Sigmoid colon (tissue), 7 donors: ENCODE measurements at regions of chr2 and their contacts with region 1.

Region 1: GRCh38 chr2:112626604-112627059 is 19.1 kb upstream of the SLC20A1 start:
- DNase-seq: peak; percentile 73
- H3K4me3 ChIP-seq: peak overlapping the region in 2 of 4 donors; percentile 25 to 27
- H3K27ac ChIP-seq: peak overlapping the region; percentile 53 to 74 (median 58)
- H3K4me1 ChIP-seq: peaks cover 0 to 8% (median 7%) of the 10 kb centered on the region in 4 donors
- H3K27me3 ChIP-seq: peaks cover 0 to 11% (median 0%) of the 10 kb centered on the region in 3 donors
- CTCF ChIP-seq: peak; percentile 70 to 85 (median 78)
- EP300 ChIP-seq: no peak
- POLR2A ChIP-seq: no peak

Region 2: DNA sequence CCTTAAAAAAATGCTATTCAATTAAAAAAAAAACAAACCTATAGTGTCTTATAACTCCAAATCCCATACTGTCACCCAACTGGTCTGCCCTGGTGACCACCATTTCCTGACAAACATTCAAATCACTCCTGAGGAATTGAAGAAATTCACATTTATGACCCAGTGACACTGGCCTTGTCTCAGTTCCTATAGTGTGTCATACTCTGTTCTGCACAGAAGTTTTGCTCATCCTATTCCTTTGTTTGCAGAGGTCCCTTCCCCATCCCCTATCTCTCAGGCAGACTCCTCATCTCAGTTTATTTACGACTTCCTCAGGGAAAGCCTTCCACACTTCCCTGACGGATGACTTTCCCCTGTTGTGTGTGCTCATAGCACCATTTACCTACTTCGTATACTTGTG is 336.5 kb before region 1 on chr2:
- intact Hi-C with region 1: no loop called
- DNase-seq: no peak
- H3K4me3 ChIP-seq: no peak overlapping the region
- H3K27ac ChIP-seq: no peak overlapping the region
- H3K4me1 ChIP-seq: peaks cover 0 to 12% (median 0%) of the 10 kb centered on the region in 4 donors
- H3K27me3 ChIP-seq: no peaks in the 10 kb centered on the region
- CTCF ChIP-seq: no peak
- EP300 ChIP-seq: no peak
- POLR2A ChIP-seq: no peak

Region 3: DNA sequence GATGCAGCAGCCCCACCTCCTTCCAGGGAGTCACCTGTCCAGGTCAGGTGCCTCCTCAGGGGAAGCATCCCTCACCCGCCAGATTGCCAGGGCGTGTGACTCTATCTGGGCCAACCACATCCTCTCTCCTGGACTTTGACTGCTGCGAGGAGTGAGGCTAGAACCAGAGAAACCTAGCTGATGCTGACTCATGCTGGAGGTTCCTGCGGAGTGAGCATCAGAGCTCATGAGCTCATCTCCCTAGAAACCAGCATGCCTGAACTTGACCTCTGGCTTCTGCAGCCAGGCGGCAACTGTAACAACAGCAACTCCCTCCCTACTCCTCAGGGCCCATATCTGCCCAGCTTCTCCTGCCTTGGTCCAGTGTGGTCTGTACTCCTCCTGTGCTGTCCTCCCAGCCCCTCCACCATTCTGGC is 65.9 kb after region 1 on chr2:
- intact Hi-C with region 1: loop called (anchors 5 kb)
- DNase-seq: no peak
- H3K4me3 ChIP-seq: no peak overlapping the region
- H3K27ac ChIP-seq: no peak overlapping the region
- H3K4me1 ChIP-seq: peaks cover 0 to 4% (median 0%) of the 10 kb centered on the region in 4 donors
- H3K27me3 ChIP-seq: no peaks in the 10 kb centered on the region
- CTCF ChIP-seq: no peak
- EP300 ChIP-seq: no peak
- POLR2A ChIP-seq: no peak

Region 4: DNA sequence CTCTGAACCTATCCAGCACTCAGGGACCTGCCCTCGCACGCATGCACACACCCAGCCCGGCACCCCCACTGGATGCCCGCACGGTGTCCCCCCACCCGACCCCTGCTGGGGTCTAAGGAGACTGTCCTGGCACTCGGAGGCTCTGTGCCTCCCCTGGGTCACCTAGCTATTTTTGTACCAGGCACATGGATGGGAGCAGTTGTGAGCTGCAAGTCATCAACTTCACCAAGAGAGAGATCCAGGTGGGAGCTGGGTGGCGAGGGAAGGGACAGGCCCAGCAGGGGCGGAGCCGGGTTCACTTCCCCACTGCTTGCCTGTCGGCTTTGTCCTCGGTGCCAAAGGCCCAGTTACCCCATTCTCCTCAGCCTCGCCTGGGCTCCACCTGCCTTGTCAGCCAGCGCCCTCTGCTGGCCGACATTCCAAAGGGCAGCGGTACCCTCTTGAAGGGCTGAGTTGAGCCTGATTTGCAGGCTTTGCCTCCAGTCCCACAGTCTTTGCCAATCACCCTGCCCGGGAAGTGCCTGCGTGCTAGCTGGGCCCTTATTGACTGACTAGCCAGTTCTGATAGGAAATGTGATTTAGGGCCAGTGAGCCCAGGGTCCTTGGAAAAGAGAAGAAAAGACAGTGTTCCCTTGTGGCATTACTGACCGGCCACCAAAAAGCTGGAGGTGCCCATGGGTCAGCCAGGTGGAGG is 100.0 kb after region 1 on chr2:
- intact Hi-C with region 1: loop called (anchors 1 kb)
- DNase-seq: peak; percentile 91
- H3K4me3 ChIP-seq: no peak overlapping the region
- H3K27ac ChIP-seq: no peak overlapping the region
- H3K4me1 ChIP-seq: peaks cover 0 to 7% (median 0%) of the 10 kb centered on the region in 4 donors
- H3K27me3 ChIP-seq: no peaks in the 10 kb centered on the region
- CTCF ChIP-seq: peak; percentile 79 to 90 (median 90)
- EP300 ChIP-seq: no peak
- POLR2A ChIP-seq: no peak

Region 5: DNA sequence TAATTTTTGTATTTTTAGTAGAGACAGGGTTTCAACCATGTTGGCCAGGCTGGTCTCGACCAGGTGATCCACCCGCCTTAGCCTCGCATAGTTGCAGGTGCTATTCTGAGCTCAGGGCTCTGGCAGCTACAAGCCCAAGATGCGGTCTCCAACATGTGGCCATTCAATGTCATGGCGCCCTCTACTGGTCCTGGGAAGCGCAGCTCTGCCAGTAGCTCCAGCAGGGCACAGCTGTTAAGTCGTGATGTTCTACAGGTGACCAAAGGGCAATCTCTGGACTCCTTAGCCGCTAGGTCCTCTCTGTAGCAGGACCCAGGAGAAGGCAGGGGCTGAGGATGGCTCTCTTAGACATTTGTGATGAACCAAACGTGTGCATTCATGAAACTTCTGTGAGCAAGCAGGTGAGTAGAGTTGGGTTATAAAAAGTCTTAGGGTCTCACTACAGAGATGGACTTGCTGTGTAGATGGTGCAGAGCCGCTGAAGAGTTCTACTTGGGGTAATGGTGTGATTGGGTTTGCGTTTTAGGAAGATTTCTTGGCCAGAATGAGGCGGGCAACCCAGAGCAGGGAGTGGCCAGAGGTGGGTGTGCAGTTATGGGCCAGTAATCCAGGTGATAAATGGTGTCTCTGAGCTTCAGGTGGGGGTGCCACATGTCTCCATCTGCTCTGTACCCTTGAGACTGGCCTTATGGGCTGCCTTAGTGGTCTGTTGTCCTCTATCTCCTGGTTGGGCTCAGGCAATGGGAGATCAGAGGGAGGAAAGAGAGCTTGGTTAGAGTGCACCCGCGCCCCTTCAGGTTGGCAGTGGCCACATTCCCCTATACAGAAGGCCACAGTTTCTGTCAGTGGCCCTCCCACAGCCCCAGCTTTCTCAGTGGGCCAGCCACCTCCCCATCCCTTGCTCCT is 315.4 kb after region 1 on chr2:
- intact Hi-C with region 1: loop called (anchors 10 kb)
- DNase-seq: peak; percentile 78
- H3K4me3 ChIP-seq: no peak overlapping the region
- H3K27ac ChIP-seq: no peak overlapping the region
- H3K4me1 ChIP-seq: peaks cover 0 to 20% (median 11%) of the 10 kb centered on the region in 4 donors
- H3K27me3 ChIP-seq: no peaks in the 10 kb centered on the region
- CTCF ChIP-seq: peak; percentile 41 to 61 (median 50)
- EP300 ChIP-seq: no peak
- POLR2A ChIP-seq: no peak